WTC11 (cell line): ENCODE measurements at regions of chr22 and their contacts with region 1.

Region 1: DNA sequence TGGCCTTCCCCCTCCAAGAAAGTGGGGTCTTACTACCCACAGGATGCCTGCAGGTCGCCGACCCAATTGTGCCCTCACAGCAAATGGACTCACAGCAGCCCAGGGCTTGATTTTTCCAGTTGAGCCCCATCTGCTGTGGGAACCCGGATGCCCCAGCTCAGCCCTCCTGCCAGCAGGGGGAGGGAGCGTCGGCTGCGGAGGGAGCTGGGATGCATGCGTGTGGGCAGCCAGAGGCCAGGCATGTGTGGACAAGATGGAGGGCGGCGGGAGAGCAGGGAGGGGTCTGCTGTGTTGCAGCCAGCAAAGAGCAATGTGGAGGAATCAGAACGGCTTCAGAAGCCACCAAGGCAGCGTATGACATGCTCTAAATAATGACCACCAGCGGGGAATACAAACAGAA is 41.0 kb upstream of the EIF3D start:
- DNase-seq: peak; percentile 74
- ATAC-seq: peak; percentile 96
- H3K4me3 Mint-ChIP-seq: no peak overlapping the region
- H3K27ac Mint-ChIP-seq: peak overlapping the region; percentile 85
- H3K4me1 Mint-ChIP-seq: peaks cover 7% of the 10 kb centered on the region
- H3K27me3 Mint-ChIP-seq: no peaks in the 10 kb centered on the region
- CTCF ChIP-seq: no peak

Region 2: GRCh38 chr22:36470162-36470993 is 99.6 kb before region 1 on chr22:
- CTCF ChIA-PET with region 1: no interaction called
- POLR2A ChIA-PET with region 1: no interaction called
- DNase-seq: peak; percentile 86
- ATAC-seq: peak; percentile 95
- H3K4me3 Mint-ChIP-seq: no peak overlapping the region
- H3K27ac Mint-ChIP-seq: peak overlapping the region; percentile 87
- H3K4me1 Mint-ChIP-seq: 0 out of 2 replicates have a peak, but pooled peaks cover 3% of the 10 kb centered on the region
- H3K27me3 Mint-ChIP-seq: no peaks in the 10 kb centered on the region
- CTCF ChIP-seq: peak; percentile 93

Region 3: DNA sequence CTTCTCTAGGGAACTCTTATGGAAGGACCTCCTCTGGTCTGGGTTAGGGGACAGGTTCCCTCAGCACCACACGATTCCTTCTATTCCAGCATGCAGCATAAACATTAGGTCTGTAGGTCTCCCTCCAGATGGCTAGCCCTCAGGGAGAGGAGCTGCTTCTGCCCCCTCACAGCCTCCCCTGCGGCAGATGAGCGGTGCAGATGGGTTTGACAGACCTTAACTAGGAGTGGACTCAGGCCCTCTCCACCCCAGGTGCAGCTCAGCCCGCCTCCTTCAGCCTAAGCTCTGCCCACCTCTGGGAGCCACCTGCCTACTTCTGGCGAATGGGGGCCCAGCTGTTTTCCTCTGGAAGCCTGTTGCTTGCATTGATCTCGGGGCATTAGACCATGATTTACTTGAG is 14.7 kb after region 1 on chr22:
- CTCF ChIA-PET with region 1: interaction called, 13 read pairs
- POLR2A ChIA-PET with region 1: interaction called, 3 read pairs
- DNase-seq: no peak
- ATAC-seq: no peak
- H3K4me3 Mint-ChIP-seq: no peak overlapping the region
- H3K27ac Mint-ChIP-seq: 0 out of 2 replicates have a peak overlapping the region, but pooled peaks have one; percentile 8
- H3K4me1 Mint-ChIP-seq: peaks cover 14% of the 10 kb centered on the region
- H3K27me3 Mint-ChIP-seq: peaks cover 9% of the 10 kb centered on the region; the same call in 1 of the 2 replicates
- CTCF ChIP-seq: no peak